ENCODE measurements at regions of chr12 and their contacts with region 1.

Region 1: GRCh38 chr12:104671407-104672098 is 214.8 kb downstream of the CHST11 start:
- DNase-seq: peak; percentile 82
- H3K4me3 Mint-ChIP-seq: peak overlapping the region; percentile 50
- H3K27ac Mint-ChIP-seq: peak overlapping the region; percentile 91
- H3K4me1 Mint-ChIP-seq: peaks cover 82% of the 10 kb centered on the region
- H3K27me3 Mint-ChIP-seq: no peaks in the 10 kb centered on the region

Region 2: GRCh38 chr12:103969381-103969970 is 702.1 kb before region 1 on chr12:
- intact Hi-C with region 1: no loop called
- DNase-seq: no peak
- H3K4me3 Mint-ChIP-seq: no peak overlapping the region
- H3K27ac Mint-ChIP-seq: no peak overlapping the region
- H3K4me1 Mint-ChIP-seq: peaks cover 43% of the 10 kb centered on the region
- H3K27me3 Mint-ChIP-seq: no peaks in the 10 kb centered on the region

Region 3: GRCh38 chr12:104494137-104494792 is 177.3 kb before region 1 on chr12:
- intact Hi-C with region 1: loop called (anchors 5 kb)
- DNase-seq: no peak
- H3K4me3 Mint-ChIP-seq: peak overlapping the region; percentile 64
- H3K27ac Mint-ChIP-seq: peak overlapping the region; percentile 89
- H3K4me1 Mint-ChIP-seq: peaks cover 92% of the 10 kb centered on the region
- H3K27me3 Mint-ChIP-seq: no peaks in the 10 kb centered on the region

Region 4: GRCh38 chr12:104604070-104604994 is 67.2 kb before region 1 on chr12:
- intact Hi-C with region 1: loop called (anchors 1 kb)
- DNase-seq: peak; percentile 34
- H3K4me3 Mint-ChIP-seq: peak overlapping the region; percentile 62
- H3K27ac Mint-ChIP-seq: peak overlapping the region; percentile 88
- H3K4me1 Mint-ChIP-seq: peaks cover 66% of the 10 kb centered on the region
- H3K27me3 Mint-ChIP-seq: no peaks in the 10 kb centered on the region

Region 5: GRCh38 chr12:104709692-104710435 is 38.3 kb after region 1 on chr12:
- intact Hi-C with region 1: no loop called
- DNase-seq: no peak
- H3K4me3 Mint-ChIP-seq: no peak overlapping the region
- H3K27ac Mint-ChIP-seq: peak overlapping the region; percentile 34
- H3K4me1 Mint-ChIP-seq: peaks cover 58% of the 10 kb centered on the region
- H3K27me3 Mint-ChIP-seq: no peaks in the 10 kb centered on the region

Region 6: GRCh38 chr12:104720339-104721038 is 48.9 kb after region 1 on chr12:
- intact Hi-C with region 1: loop called (anchors 1 kb)
- DNase-seq: peak; percentile 69
- H3K4me3 Mint-ChIP-seq: peak overlapping the region; percentile 81
- H3K27ac Mint-ChIP-seq: peak overlapping the region; percentile 94
- H3K4me1 Mint-ChIP-seq: peaks cover 78% of the 10 kb centered on the region
- H3K27me3 Mint-ChIP-seq: no peaks in the 10 kb centered on the region